PC-3 (cell line): ENCODE measurements at regions of chr7 and their contacts with region 1.

Region 1: GRCh38 chr7:73436031-73436828 is 2.7 kb downstream of the FZD9 start:
- DNase-seq: peak; percentile 55
- ATAC-seq: peak; percentile 79
- H3K4me3 ChIP-seq: no peak overlapping the region
- H3K27ac ChIP-seq: no peak overlapping the region
- H3K4me1 ChIP-seq: peaks cover 9% of the 10 kb centered on the region; the same call in 1 of the 2 replicates
- H3K27me3 ChIP-seq: no peaks in the 10 kb centered on the region
- CTCF ChIP-seq: peak; percentile 45; the same call in 1 of the 2 replicates

Region 2: GRCh38 chr7:73308665-73309214 is 127.5 kb before region 1 on chr7 and contains the start of gene NSUN5:
- CTCF ChIA-PET with region 1: no interaction called
- POLR2A ChIA-PET with region 1: no interaction called
- intact Hi-C with region 1: no loop called
- DNase-seq: peak; percentile 75
- ATAC-seq: peak; percentile 90
- H3K4me3 ChIP-seq: peak within 1 kb of the TSS; percentile 86
- H3K27ac ChIP-seq: no peak within 1 kb of the TSS; the same call in 1 of the 2 replicates
- H3K4me1 ChIP-seq: peaks cover 11% of the 10 kb centered on the region; the same call in 1 of the 2 replicates
- H3K27me3 ChIP-seq: no peaks in the 10 kb centered on the region
- CTCF ChIP-seq: no peak
- total RNA-seq, gene NSUN5: 36.0 and 51.6 TPM in 2 replicates

Region 3: GRCh38 chr7:73328696-73329095 is 107.5 kb before region 1 on chr7:
- CTCF ChIA-PET with region 1: no interaction called
- POLR2A ChIA-PET with region 1: no interaction called
- intact Hi-C with region 1: loop called (anchors 1 kb)
- DNase-seq: no peak
- ATAC-seq: no peak
- H3K4me3 ChIP-seq: no peak overlapping the region
- H3K27ac ChIP-seq: no peak overlapping the region
- H3K4me1 ChIP-seq: no peaks in the 10 kb centered on the region
- H3K27me3 ChIP-seq: no peaks in the 10 kb centered on the region
- CTCF ChIP-seq: no peak